BJ (cell line): ENCODE measurements at regions of chr3 and their contacts with region 1.

Region 1: DNA sequence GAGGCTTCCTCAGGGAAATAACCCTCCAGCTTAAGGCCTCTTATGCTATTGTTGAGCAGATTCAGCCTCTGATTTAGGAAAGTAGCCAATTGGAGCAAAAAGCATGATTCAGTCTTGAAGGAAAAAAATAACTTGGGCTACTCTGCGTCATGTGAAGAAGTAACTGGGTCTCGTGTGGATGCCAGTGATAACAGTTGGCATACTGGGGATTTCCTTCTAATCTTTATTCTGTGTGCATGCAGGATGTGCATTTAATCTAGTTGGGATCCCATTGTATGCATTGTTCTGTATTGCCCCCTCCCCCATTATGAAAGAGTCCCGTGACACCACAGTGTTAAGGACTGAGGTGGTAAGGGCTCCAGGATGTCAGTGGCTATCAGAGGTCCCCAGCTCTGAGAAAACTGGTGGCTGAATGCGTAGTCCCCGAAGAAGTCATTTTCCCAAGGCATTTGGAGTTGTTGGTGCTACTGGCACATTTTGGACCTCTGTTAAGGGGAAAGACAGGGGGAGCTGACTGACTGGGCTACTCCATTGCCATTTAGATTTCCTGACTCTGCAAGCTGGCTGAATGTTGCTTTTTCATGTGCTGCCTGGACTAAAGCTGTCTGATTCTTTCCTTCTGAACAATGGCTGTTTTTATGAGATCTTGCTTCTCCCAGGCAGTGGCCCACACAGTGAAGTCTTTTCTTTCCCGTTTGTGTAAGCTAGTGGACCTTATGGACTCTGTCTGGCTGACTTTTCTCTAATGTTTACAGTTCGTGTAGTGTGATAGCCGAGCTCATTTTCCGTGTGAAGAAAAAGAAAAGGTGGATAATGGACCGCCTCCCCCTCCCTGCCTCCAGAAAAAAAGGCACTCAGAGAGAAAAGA is 38.4 kb upstream of the TRAK1 start:
- DNase-seq: no peak
- H3K4me3 ChIP-seq: no peak overlapping the region
- H3K27me3 ChIP-seq: no peaks in the 10 kb centered on the region
- CTCF ChIP-seq: no peak

Region 2: GRCh38 chr3:41753651-41754050 is 299.1 kb before region 1 on chr3:
- CTCF ChIA-PET with region 1: no interaction called
- POLR2A ChIA-PET with region 1: no interaction called
- DNase-seq: no peak
- H3K4me3 ChIP-seq: no peak overlapping the region
- H3K27me3 ChIP-seq: no peaks in the 10 kb centered on the region
- CTCF ChIP-seq: no peak

Region 3: DNA sequence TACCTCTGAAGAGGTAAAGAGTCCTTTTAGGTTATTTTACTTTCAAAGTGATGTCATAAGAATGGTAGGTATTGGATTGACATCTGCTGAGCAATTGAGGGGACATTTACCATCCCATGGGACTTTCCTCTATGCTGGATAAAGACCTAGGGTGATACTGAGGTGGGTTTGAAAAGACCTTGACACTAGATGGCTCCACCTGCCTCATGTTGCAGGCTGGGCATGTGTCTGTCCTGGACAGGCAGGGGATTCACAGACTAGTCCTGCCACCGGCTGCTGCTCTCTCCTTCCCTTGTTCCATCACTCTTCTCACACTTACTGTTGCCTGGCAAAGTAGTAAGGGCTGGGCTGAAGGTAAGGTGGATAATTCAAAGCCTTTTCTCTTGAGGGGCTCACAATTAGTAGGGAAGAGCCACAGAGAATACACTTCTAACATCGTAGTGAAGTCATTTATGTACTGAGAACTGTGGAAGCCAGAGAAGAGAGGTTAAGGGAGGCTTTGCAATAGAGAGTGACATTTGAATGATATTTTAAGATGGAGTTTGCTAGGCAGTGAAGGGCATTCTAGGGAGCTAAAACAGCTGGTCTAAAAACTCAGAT is 66.1 kb after region 1 on chr3:
- CTCF ChIA-PET with region 1: no interaction called
- POLR2A ChIA-PET with region 1: interaction called, 11 read pairs
- DNase-seq: no peak
- H3K4me3 ChIP-seq: no peak overlapping the region
- H3K27me3 ChIP-seq: no peaks in the 10 kb centered on the region
- CTCF ChIP-seq: peak; percentile 45